ENCODE measurements at regions of chr1 and their contacts with region 1.

Region 1: DNA sequence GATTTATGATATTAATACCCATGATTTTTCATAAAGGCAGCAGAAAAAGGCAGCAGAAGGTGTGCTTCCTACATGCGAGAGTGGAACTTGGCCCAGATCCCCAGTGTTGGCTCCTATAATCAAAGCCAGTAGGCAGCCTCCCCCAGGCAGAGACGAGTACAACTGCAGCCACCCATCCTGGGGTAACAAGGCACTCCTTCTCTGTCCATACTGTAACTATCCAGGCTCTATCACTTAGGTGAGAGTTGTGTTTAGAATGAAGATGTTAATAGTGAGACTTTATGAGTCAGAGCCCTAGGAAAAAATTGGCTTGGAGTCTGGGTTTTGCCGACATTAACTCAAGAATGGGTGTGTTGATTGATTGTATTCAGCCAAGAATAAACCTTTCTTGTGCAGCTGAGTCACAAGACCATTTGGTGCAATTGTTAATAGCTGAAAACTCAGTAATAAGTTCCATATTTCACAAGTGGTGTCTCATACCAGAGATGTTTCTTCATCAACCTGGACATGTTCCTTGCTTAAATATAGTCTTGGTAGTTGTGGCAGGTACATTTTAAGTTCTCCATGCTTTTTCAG is 322.3 kb downstream of the DUSP10 start:
- DNase-seq: peak in 1 of 2 donors; percentile 45
- H3K4me3 ChIP-seq: no peak overlapping the region
- CTCF ChIP-seq: no peak
- POLR2A ChIP-seq: no peak

Region 2: DNA sequence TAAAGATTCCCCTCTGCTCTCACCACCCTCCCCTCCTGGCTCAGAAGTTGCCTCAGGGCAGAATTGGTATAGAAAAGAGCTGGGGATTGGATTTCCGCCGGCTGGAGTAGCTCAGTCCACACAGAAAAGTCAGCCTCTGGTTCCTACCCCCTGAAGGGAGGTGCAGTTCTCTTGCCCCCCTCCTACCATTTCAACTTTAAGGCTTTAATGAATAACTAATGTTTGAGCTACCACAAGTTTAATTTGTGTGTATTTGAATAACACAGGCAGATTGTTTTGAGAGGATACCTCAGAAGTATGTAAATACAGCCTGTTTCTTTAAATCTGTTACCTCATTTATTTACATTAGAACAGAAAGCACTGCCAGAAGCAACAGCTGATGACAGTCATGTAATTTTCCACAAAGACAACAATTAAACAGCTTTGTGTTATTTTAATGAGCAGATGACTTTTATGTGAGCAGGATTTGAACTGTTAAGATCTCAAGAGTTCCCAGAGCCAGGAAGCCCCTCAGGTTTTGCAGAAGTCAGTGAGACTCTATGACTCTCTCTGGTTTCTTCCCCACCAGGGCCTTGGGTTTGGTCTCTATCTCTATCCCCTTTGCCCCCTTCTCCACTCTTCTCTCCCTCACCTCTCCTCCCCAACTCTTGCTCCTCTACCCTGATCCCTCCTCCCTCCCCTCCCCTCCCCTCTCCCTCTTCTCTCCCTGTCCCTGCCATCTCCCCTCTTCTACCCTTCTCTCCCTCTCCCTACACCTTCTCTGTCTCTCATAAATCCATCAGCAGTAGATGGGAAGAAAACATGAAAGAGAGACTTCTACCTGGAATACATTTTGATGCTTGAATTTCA is 295.9 kb after region 1 on chr1:
- intact Hi-C with region 1: no loop called
- DNase-seq: no peak
- H3K4me3 ChIP-seq: no peak overlapping the region
- CTCF ChIP-seq: no peak
- POLR2A ChIP-seq: no peak

Region 3: DNA sequence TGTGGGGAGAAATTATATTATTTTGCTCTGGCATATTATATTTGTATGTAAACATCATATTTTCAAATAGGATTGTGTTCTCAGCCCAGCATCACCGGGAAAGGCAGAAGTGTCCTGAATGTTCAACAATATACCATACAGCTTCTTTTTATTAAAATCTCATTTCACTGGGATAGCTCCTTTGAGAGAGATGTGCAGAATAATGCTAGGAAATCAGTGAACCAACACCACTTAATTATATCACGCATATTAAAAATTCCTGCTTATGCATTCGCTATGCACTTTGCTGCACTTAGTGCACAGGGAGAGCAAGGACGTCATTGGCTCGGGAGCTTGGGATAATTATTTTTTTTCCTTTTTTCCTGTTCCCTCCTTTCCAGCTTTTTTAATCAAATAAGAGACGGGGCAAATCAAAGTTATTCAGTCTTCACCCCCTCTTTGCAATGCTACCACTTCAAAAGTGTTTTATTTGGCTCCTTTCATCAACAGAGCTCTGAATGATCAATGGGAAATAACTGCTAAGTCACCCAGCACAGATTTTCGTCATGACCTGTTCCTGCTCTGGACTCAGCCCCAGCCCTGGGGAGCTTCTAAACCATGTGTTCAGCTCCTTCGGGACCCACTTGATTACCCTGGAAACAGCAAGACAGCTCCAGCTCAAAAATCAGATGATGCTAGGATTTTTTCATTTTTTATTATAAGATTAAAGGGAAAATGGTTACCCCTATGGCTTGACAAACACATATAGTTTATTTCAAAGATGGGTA is 487.7 kb after region 1 on chr1:
- intact Hi-C with region 1: no loop called
- DNase-seq: no peak
- H3K4me3 ChIP-seq: no peak overlapping the region
- CTCF ChIP-seq: no peak
- POLR2A ChIP-seq: no peak

Region 4: GRCh38 chr1:222892137-222892769 is 1472.7 kb after region 1 on chr1:
- intact Hi-C with region 1: loop called (anchors 10 kb)
- DNase-seq: no peak
- H3K4me3 ChIP-seq: no peak overlapping the region
- CTCF ChIP-seq: no peak
- POLR2A ChIP-seq: no peak

Measured in lower leg skin (tissue), 4 donors.